Sigmoid colon (tissue), 7 donors: ENCODE measurements at regions of chr4 and their contacts with region 1.

Region 1: DNA sequence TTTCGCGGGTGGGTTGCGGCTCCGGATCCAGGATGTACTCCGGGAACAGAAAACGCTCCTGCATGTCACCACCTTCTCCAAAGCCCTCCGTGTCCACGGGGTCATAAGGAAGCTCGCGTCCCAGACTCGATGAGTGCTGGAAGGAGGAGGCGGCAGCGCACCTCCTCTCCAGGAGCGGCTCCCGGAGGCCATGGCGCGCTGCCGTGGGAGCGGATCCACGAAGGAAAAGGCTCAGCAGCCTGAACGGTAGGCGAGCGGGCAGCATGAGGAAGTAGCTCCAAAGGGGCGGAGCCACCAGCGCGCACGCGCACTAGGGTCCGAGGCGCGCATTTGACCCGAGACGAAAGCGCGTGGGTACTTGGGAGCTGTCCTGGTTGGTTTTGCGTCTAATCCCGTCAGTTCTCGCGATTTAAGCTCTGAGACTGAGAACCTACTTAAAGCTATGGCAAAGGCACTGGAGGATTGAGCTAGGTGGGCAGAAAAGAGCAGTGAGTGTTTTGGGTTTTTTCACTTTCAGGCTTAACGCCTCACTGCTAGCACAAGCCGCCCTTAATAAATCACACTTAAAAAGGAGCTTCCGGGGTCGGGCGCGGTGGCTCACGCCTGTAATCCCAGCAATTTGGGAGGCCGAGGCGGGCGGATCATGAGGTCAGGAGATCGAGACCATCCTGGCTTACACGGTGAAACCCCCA is at the start of gene NOA1:
- DNase-seq: peak; percentile 99
- H3K4me3 ChIP-seq: peak within 1 kb of the TSS; percentile 61 to 94 (median 90)
- H3K27ac ChIP-seq: peak within 1 kb of the TSS; percentile 88 to 95 (median 93)
- H3K4me1 ChIP-seq: peaks cover 0 to 66% (median 51%) of the 10 kb centered on the region in 4 donors
- H3K27me3 ChIP-seq: no peaks in the 10 kb centered on the region
- CTCF ChIP-seq: peak in 1 of 4 experiments; percentile 3
- EP300 ChIP-seq: peak in 1 of 4 donors; percentile 13
- POLR2A ChIP-seq: peak; percentile 57 to 72
- total RNA-seq, gene NOA1: 24.4 to 37.4 (median 25.6) TPM

Region 2: DNA sequence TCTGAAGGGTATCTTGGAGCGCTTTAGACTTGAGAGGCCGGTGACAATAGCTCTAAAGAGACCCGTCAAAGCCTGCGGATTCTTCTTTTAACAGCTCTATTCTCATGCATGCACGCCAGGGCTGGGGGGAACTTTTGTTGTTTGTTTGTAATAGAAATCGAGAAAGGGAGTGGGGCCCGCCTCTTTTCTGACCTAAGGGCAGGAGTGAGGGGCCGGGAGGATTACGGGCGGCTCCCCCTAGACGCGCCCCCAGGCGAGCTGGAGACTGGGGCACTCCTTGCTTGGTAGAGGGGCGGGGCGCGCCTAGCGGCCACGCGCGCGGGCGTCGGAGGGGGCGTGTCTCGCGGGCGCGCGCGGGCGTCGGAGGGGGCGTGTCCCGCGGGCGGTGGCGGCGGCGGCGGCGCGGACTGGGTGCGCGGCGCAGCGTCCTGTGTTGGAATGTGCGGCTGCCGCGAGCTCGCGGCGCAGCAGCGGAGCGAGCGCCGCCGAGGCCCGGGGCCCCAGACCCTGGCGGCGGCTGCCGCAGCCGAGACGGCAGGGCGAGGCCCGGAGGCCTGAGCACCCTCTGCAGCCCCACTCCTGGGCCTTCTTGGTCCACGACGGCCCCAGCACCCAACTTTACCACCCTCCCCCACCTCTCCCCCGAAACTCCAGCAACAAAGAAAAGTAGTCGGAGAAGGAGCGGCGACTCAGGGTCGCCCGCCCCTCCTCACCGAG is 69.8 kb before region 1 on chr4 and contains the start of gene REST:
- intact Hi-C with region 1: loop called (anchors 1 kb)
- DNase-seq: peak; percentile 87
- H3K4me3 ChIP-seq: peak within 1 kb of the TSS; percentile 75 to 98 (median 94)
- H3K27ac ChIP-seq: peak within 1 kb of the TSS; percentile 89 to 97 (median 95)
- H3K4me1 ChIP-seq: peaks cover 0 to 30% (median 27%) of the 10 kb centered on the region in 4 donors
- H3K27me3 ChIP-seq: no peaks in the 10 kb centered on the region
- CTCF ChIP-seq: no peak
- EP300 ChIP-seq: no peak
- POLR2A ChIP-seq: no peak
- total RNA-seq, gene REST: 23.7 to 32.8 (median 26.3) TPM

Region 3: DNA sequence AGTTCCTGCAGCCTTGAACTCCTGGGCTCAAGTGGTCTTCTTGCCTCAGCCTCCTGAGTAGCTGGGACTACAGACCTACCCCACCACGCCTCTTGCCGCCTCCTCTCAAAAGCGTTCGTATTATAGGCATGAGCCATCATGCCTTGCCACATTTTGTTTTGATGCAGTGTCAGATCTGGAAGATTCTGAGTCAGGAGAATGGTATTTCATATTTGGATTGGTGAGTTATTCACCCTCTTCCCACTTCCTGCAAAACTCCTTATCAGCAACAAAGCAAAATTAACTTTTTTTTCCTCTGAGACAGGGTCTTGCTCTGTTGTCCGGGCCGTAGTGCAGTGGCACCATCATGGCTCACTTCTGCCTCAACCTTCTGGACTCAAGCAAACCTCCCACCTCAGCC is 40.2 kb before region 1 on chr4:
- intact Hi-C with region 1: no loop called
- DNase-seq: no peak
- H3K4me3 ChIP-seq: no peak overlapping the region
- H3K27ac ChIP-seq: no peak overlapping the region
- H3K4me1 ChIP-seq: no peaks in the 10 kb centered on the region
- H3K27me3 ChIP-seq: no peaks in the 10 kb centered on the region
- CTCF ChIP-seq: no peak
- EP300 ChIP-seq: no peak
- POLR2A ChIP-seq: no peak

Region 4: GRCh38 chr4:56958111-56958517 is 19.4 kb before region 1 on chr4:
- intact Hi-C with region 1: loop called (anchors 1 kb)
- DNase-seq: peak; percentile 96
- H3K4me3 ChIP-seq: no peak overlapping the region
- H3K27ac ChIP-seq: peak overlapping the region; percentile 10 to 56 (median 47)
- H3K4me1 ChIP-seq: peaks cover 0 to 14% (median 11%) of the 10 kb centered on the region in 4 donors
- H3K27me3 ChIP-seq: no peaks in the 10 kb centered on the region
- CTCF ChIP-seq: no peak
- EP300 ChIP-seq: no peak
- POLR2A ChIP-seq: no peak

Region 5: GRCh38 chr4:57119054-57119651 is 141.7 kb after region 1 on chr4:
- intact Hi-C with region 1: loop called (anchors 5 kb)
- DNase-seq: peak; percentile 92
- H3K4me3 ChIP-seq: peak overlapping the region in 3 of 4 donors; percentile 12 to 25 (median 16)
- H3K27ac ChIP-seq: peak overlapping the region; percentile 79 to 90 (median 86)
- H3K4me1 ChIP-seq: peaks cover 0 to 30% (median 21%) of the 10 kb centered on the region in 4 donors
- H3K27me3 ChIP-seq: no peaks in the 10 kb centered on the region
- CTCF ChIP-seq: no peak
- EP300 ChIP-seq: peak in 2 of 4 donors; percentile 46 to 76
- POLR2A ChIP-seq: peak in 1 of 2 donors; percentile 9